ENCODE measurements at regions of chr3 and their contacts with region 1.

Region 1: GRCh38 chr3:185659942-185660921 is 74.1 kb downstream of the SENP2 start:
- DNase-seq: peak; percentile 86
- H3K4me3 Mint-ChIP-seq: no peak overlapping the region
- H3K27ac Mint-ChIP-seq: no peak overlapping the region
- H3K4me1 Mint-ChIP-seq: peaks cover 12% of the 10 kb centered on the region
- H3K27me3 Mint-ChIP-seq: no peaks in the 10 kb centered on the region
- CTCF ChIP-seq: peak; percentile 99

Region 2: GRCh38 chr3:185648396-185648795 is 11.8 kb before region 1 on chr3:
- CTCF ChIA-PET with region 1: interaction called, 14 read pairs
- intact Hi-C with region 1: no loop called
- DNase-seq: no peak
- H3K4me3 Mint-ChIP-seq: no peak overlapping the region
- H3K27ac Mint-ChIP-seq: no peak overlapping the region
- H3K4me1 Mint-ChIP-seq: no peaks in the 10 kb centered on the region
- H3K27me3 Mint-ChIP-seq: no peaks in the 10 kb centered on the region
- CTCF ChIP-seq: no peak

Region 3: DNA sequence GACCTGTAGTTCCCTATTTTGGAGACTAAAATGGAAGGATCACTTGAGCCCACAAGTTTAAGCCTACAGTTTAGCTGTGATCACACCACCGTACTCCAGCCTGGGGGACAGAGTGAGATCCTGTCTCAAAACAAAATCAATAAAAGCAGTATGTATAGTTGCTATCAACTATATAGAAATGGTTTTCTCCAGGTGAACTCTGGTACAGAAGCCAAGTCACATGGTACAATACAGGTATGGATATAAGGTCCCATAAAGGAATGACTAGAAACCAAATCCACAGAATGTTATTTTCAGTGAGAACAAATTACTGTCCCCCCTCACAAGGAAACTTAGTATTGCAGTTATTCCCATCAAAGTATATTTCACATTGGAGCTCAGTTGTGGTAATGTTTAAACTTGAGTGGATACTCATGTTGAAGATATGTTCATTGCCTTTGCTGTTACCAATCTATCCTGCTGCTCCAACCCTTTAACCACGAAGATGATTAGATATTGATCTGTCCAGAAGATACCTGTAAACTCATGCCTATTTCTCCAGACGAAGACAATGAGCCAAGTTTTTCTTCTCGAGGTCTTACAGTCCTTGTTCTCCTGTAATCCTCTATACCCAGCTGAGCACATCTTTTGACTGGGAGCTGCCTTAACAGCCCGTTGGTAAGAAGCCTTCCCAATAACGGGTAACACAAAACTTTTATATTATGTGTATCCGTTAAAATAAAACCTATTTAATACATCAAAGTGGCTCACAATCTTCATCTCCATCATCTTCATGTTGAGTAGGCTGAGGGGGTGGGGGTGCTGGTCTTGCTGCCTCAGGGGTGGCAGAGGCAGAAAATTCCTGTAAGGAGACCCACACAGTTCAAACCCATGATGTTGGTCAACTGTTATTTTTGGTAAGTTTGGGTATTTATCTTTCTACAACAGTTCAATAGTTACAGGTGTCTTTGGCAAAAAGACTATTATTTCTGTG is 253.0 kb after region 1 on chr3:
- CTCF ChIA-PET with region 1: interaction called, 16 read pairs
- intact Hi-C with region 1: no loop called
- DNase-seq: no peak
- H3K4me3 Mint-ChIP-seq: no peak overlapping the region
- H3K27ac Mint-ChIP-seq: peak overlapping the region; percentile 7
- H3K4me1 Mint-ChIP-seq: peaks cover 10% of the 10 kb centered on the region
- H3K27me3 Mint-ChIP-seq: no peaks in the 10 kb centered on the region
- CTCF ChIP-seq: no peak

Region 4: DNA sequence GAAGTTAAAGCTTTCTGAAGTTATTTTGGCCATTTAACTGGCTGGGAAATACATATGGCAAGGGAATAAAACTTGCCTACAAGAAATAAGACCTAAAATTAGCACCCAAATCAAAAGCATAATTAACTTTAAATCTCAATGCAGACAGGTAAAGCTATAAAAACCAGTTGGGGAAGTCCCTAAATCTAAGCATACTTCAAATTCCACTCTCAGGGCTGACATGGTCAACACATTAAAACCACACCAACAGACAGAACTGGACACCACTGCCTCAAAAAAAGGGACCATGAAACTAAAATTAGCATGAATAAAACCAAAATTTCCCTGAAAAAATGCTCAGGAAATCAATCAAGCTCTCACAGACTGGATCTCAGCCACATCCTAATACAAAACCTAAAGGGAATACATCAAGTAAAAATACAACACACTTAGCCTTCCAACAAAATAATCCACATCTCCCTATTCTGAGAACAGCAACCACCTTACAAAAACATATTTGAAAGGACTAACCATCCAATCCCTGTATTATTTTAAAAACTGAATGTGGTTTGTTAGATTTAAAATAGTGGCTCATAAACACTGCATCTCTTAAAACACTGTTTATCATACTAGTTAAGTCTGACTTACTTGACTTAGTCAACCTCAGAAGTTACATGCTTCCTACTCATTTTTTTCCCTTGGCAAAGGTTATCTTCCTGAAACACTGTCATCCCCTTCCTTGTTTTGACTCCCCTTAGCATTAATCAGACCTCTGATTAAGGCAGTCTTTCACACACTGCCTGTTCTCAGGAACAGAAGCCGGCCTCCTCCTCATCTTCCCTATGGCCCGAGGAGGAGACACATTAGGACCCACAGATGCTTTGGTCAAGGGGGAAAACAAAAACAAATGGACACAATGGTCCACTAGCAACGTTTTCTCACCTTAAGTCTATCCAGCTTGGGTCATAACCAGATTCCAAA is 269.2 kb after region 1 on chr3:
- CTCF ChIA-PET with region 1: interaction called, 13 read pairs
- intact Hi-C with region 1: loop called (anchors 5 kb)
- DNase-seq: no peak
- H3K4me3 Mint-ChIP-seq: peak overlapping the region; percentile 95
- H3K27ac Mint-ChIP-seq: peak overlapping the region; percentile 41
- H3K4me1 Mint-ChIP-seq: peaks cover 89% of the 10 kb centered on the region
- H3K27me3 Mint-ChIP-seq: no peaks in the 10 kb centered on the region
- CTCF ChIP-seq: no peak

Region 5: GRCh38 chr3:186083746-186084145 is 423.5 kb after region 1 on chr3:
- CTCF ChIA-PET with region 1: no interaction called
- intact Hi-C with region 1: no loop called
- DNase-seq: no peak
- H3K4me3 Mint-ChIP-seq: no peak overlapping the region
- H3K27ac Mint-ChIP-seq: no peak overlapping the region
- H3K4me1 Mint-ChIP-seq: no peaks in the 10 kb centered on the region
- H3K27me3 Mint-ChIP-seq: no peaks in the 10 kb centered on the region
- CTCF ChIP-seq: no peak